Dorsolateral prefrontal cortex (tissue), 120 donors: ENCODE measurements at regions of chr7 and their contacts with region 1.

Region 1: DNA sequence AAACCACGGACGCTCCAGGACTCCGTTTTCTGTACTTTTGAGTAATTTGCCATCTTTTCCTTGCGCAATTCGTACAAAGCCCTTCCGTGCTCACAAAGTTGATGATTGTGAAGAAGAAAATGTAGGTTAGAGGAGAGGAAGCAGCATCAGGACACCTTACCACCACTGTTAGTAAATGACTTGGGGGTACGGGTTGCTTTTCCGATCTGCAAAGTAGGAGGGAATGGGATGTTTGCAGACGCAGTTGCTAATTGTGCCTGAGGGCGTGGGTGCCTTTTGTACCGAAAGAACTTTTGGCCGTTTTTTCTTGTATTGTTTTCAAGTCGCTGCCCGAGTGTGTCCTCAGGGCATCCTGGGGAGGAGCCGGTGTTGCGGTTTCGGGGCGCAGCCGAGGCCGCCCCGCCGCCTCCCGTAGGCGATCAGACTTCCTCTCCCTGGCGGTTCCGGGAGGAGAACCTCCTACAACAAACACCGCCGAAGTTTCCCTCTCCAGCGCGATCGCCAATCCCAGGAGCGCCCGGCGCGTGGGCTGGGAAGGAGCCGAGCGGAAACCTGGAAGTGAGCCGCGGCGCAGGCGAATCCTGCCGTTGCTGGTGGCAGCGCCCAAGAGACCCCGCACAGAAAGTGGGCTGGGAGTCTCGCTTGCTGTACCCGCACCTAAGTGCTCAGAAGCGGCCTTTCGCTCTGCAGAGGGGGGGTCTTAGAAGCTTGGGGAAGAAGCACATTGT is 1.0 kb downstream of the PRR15 start:
- DNase-seq: peak in 5 of 10 donors; percentile 18 to 64 (median 61)
- H3K4me3 ChIP-seq: peak overlapping the region; percentile 39 to 88 (median 66)
- H3K27ac ChIP-seq: peak overlapping the region in 7 of 59 donors; percentile 3 to 47 (median 24)
- H3K27me3 ChIP-seq: peaks cover 0 to 10% (median 0%) of the 10 kb centered on the region in 45 donors
- CTCF ChIP-seq: no peak

Region 2: GRCh38 chr7:29488977-29489376 is 75.7 kb before region 1 on chr7:
- intact Hi-C with region 1: loop called in 1 of 2 experiments (anchors 10 kb)
- DNase-seq: no peak
- H3K4me3 ChIP-seq: peak overlapping the region in 22 of 59 donors; percentile 0 to 63 (median 9)
- H3K27ac ChIP-seq: peak overlapping the region; percentile 14 to 100 (median 97)
- H3K27me3 ChIP-seq: no peaks in the 10 kb centered on the region
- CTCF ChIP-seq: no peak